H1 (cell line): ENCODE measurements at regions of chr3 and their contacts with region 1.

Region 1: DNA sequence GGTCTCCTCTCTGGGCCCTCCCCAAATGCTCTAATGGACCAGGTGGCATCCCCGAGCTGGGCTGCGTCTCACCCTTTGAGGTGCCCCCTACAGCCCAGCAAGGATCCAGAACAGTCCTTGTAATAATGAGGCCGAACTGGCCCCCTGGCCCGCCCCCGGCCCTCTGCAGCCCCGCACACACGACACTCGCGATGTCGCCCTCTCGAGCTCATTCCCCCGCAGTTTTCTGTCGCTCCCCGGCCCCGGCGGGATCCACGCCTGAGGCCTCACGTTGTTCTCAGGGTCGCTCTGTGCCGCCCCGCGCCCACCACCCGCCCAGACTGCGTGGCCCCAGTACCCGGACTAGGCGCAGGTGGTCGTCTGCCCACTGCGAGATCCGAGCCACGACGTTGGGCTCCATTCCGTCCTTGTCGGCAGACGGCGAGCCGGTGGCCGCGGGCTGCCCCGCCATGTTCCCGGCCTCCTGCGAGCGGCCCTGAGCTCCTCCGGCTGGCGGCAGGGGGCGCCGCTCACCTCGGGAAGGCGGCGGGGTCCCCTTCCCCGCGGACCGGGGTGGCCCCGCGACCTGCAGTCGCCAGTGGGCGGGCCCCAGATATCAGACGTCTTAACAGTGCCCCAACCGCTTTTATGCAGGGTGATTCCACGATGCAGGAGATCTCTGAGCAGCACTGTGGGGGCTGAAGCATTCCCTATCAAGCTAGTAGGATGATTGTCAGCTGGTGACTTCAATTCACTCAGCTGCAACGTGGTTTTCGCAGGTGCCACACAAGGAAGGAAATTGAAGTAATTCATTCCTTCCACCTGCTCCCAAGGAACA is at the start of gene C3orf33:
- DNase-seq: peak in 1 of 2 experiments; percentile 88
- H3K4me3 ChIP-seq: peak within 1 kb of the TSS; percentile 71 to 90 (median 76)
- H3K27ac ChIP-seq: peak within 1 kb of the TSS; percentile 48; the same call in 1 of the 2 replicates
- H3K4me1 ChIP-seq: peaks cover 0 to 2% (median 1%) of the 10 kb centered on the region in 4 experiments; a peak in 3 of 7 replicates
- H3K27me3 ChIP-seq: no peaks in the 10 kb centered on the region; a peak in 1 of 7 replicates
- CTCF ChIP-seq: peak; percentile 85 to 89 (median 86)
- EP300 ChIP-seq: no peak
- POLR2A ChIP-seq: peak in 1 of 2 experiments; percentile 66; a peak in 2 of 3 replicates
- RAD21 ChIP-seq: peak; percentile 75 to 85
- total RNA-seq, gene C3orf33: 2.4 and 3.4 TPM in 2 replicates

Region 2: DNA sequence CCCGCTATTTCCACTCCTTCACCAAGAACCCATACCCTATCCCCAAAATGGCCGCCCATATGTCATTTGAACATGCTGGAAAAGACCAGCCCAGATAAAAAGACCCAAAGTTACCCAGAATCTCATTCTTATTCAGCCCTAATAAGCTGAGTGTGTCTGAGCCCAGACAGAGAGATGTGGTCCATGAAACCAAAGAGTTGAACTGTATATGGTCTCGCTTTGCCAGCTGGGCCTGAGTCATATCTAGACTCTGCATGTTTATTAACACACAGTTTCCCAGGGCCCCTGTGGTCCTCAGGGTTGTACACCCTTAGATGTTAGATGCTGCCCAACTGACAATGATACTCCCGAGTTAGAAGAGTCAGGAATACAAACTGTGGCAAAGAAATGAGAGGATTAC is 310.6 kb before region 1 on chr3:
- CTCF ChIA-PET with region 1: no interaction called
- POLR2A ChIA-PET with region 1: no interaction called
- DNase-seq: no peak
- H3K4me3 ChIP-seq: no peak overlapping the region
- H3K27ac ChIP-seq: no peak overlapping the region
- H3K4me1 ChIP-seq: no peaks in the 10 kb centered on the region
- H3K27me3 ChIP-seq: no peaks in the 10 kb centered on the region
- CTCF ChIP-seq: no peak
- EP300 ChIP-seq: no peak
- POLR2A ChIP-seq: no peak
- RAD21 ChIP-seq: no peak

Region 3: GRCh38 chr3:155744626-155745324 is 61.2 kb before region 1 on chr3 and contains the start of gene PLCH1:
- CTCF ChIA-PET with region 1: interaction called, 19 read pairs
- POLR2A ChIA-PET with region 1: interaction called, 10 read pairs
- DNase-seq: peak; percentile 80 to 90
- H3K4me3 ChIP-seq: peak within 1 kb of the TSS; percentile 72 to 96 (median 86)
- H3K27ac ChIP-seq: peak within 1 kb of the TSS; percentile 38; the same call in 1 of the 2 replicates
- H3K4me1 ChIP-seq: peaks cover 5 to 14% (median 10%) of the 10 kb centered on the region in 4 experiments; a peak in 6 of 7 replicates
- H3K27me3 ChIP-seq: no peaks in the 10 kb centered on the region
- CTCF ChIP-seq: no peak
- EP300 ChIP-seq: peak in 1 of 2 experiments; percentile 38; a peak in 1 of 3 replicates
- POLR2A ChIP-seq: peak in 1 of 2 experiments; percentile 10; a peak in 1 of 3 replicates
- RAD21 ChIP-seq: peak; percentile 16 to 19; a peak in 2 of 4 replicates
- total RNA-seq, gene PLCH1: 17.2 and 17.4 TPM in 2 replicates

Region 4: DNA sequence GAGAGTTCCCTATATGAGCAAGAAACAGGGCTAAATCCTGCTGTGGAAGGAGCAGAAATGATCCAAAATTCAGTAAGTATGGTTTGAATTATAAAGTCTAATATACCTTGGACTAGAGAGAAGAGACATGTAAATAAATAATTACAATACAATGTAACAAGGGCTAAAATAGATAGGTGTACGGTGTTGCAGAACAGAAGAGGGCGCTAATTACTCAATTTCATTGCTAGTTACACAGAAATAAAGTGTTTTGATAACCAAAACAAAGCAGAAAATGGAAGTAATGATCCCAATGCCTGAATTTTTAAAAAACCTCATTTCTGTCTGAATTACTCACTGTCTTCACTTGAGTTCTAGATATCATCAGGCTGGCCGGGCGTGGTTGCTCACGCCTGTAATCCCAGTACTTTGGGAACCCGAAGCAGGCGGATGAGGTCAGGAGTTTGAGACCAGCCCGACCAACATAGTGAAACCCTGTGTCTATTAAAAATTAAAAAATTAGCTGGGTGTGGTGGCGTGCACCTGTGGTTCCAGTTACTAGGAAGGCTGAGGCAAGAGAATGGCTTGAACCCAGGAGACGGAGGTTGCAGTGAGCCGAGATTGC is 52.9 kb before region 1 on chr3:
- CTCF ChIA-PET with region 1: interaction called, 19 read pairs
- POLR2A ChIA-PET with region 1: interaction called, 8 read pairs
- DNase-seq: no peak
- H3K4me3 ChIP-seq: no peak overlapping the region
- H3K27ac ChIP-seq: no peak overlapping the region
- H3K4me1 ChIP-seq: peaks cover 3 to 13% (median 6%) of the 10 kb centered on the region in 4 experiments; a peak in 5 of 7 replicates
- H3K27me3 ChIP-seq: no peaks in the 10 kb centered on the region
- CTCF ChIP-seq: peak in 2 of 3 experiments; percentile 25 to 50; a peak in 2 of 4 replicates
- EP300 ChIP-seq: no peak
- POLR2A ChIP-seq: no peak
- RAD21 ChIP-seq: peak; percentile 56 to 59

Region 5: DNA sequence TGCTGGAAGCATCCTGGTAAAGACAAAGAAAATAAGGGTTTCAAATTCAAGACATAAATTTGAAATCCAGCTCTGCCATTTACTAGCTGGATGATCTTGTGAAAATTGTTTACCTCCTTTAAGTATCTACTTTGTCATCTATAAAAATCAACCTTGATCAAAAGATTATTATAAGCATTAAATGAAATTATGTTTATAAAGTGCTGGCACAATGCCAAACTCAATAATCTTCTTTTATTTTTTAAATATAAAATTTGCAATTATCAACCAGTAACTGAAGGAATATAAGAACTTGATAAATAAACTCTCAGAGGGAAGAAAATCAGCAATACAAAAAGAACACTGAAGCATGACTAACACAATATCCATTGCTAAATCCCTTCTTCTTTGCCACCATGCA is 25.7 kb before region 1 on chr3:
- CTCF ChIA-PET with region 1: interaction called, 21 read pairs
- POLR2A ChIA-PET with region 1: no interaction called
- DNase-seq: no peak
- H3K4me3 ChIP-seq: no peak overlapping the region
- H3K27ac ChIP-seq: no peak overlapping the region
- H3K4me1 ChIP-seq: no peaks in the 10 kb centered on the region
- H3K27me3 ChIP-seq: no peaks in the 10 kb centered on the region
- CTCF ChIP-seq: no peak
- EP300 ChIP-seq: no peak
- POLR2A ChIP-seq: no peak
- RAD21 ChIP-seq: no peak

Region 6: DNA sequence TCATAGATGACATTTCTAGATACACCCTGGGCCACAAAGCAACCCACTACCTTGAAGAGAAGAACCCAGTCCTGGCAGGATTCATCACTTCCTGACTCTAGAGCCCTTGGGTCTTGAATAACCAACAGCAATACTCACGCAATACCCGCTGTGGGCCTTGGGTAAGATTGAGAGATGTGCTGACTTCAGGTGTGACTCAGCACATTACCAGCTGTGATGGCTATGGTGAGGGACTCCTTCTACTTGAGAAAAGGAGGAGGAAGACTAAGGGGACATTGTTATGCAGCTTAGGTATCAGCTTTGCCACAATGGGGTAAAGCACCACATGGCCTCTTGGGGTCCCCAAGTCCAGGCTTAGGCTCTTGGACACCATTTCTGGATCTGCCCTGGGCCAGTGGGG is 14.8 kb before region 1 on chr3:
- CTCF ChIA-PET with region 1: interaction called, 23 read pairs
- POLR2A ChIA-PET with region 1: interaction called, 5 read pairs
- DNase-seq: no peak
- H3K4me3 ChIP-seq: no peak overlapping the region
- H3K27ac ChIP-seq: no peak overlapping the region
- H3K4me1 ChIP-seq: peaks cover 0 to 7% (median 3%) of the 10 kb centered on the region in 4 experiments; a peak in 4 of 7 replicates
- H3K27me3 ChIP-seq: no peaks in the 10 kb centered on the region
- CTCF ChIP-seq: peak in 1 of 3 experiments; percentile 16; a peak in 1 of 4 replicates
- EP300 ChIP-seq: no peak
- POLR2A ChIP-seq: no peak
- RAD21 ChIP-seq: peak in 1 of 2 experiments; percentile 5; a peak in 1 of 4 replicates

Region 7: GRCh38 chr3:155854141-155854940 is 48.3 kb after region 1 on chr3 and contains the start of gene SLC33A1:
- CTCF ChIA-PET with region 1: interaction called, 10 read pairs
- POLR2A ChIA-PET with region 1: interaction called, 9 read pairs
- DNase-seq: peak; percentile 97 to 98
- H3K4me3 ChIP-seq: peak within 1 kb of the TSS; percentile 85 to 96 (median 88)
- H3K27ac ChIP-seq: peak within 1 kb of the TSS; percentile 66
- H3K4me1 ChIP-seq: peaks cover 0 to 9% (median 3%) of the 10 kb centered on the region in 4 experiments; a peak in 4 of 7 replicates
- H3K27me3 ChIP-seq: no peaks in the 10 kb centered on the region
- CTCF ChIP-seq: no peak
- EP300 ChIP-seq: peak in 1 of 2 experiments; percentile 55; a peak in 1 of 3 replicates
- POLR2A ChIP-seq: peak; percentile 72 to 78
- RAD21 ChIP-seq: peak in 1 of 2 experiments; percentile 0; a peak in 1 of 4 replicates
- total RNA-seq, gene SLC33A1: 21.4 and 24.2 TPM in 2 replicates

Region 8: GRCh38 chr3:155870133-155870944 is 64.3 kb after region 1 on chr3 and contains the start of gene GMPS:
- CTCF ChIA-PET with region 1: interaction called, 17 read pairs
- POLR2A ChIA-PET with region 1: interaction called, 27 read pairs
- DNase-seq: peak; percentile 88 to 97
- H3K4me3 ChIP-seq: peak within 1 kb of the TSS; percentile 77 to 97 (median 88)
- H3K27ac ChIP-seq: peak within 1 kb of the TSS; percentile 89; the same call in 1 of the 2 replicates
- H3K4me1 ChIP-seq: peaks cover 0 to 5% (median 2%) of the 10 kb centered on the region in 4 experiments; a peak in 3 of 7 replicates
- H3K27me3 ChIP-seq: no peaks in the 10 kb centered on the region
- CTCF ChIP-seq: peak; percentile 56 to 71 (median 60)
- EP300 ChIP-seq: no peak
- POLR2A ChIP-seq: peak; percentile 84 to 85
- RAD21 ChIP-seq: peak; percentile 75 to 83
- total RNA-seq, gene GMPS: 161 and 175 TPM in 2 replicates